Activated CD4-positive, alpha-beta T cell treated with anti-CD3 and anti-CD28 coated beads for 36 hours (primary cell): ENCODE measurements at regions of chr9 and their contacts with region 1.

Region 1: GRCh38 chr9:128455849-128456612 is at the start of gene ODF2:
- DNase-seq: peak; percentile 99
- ATAC-seq: peak; percentile 95
- H3K4me3 Mint-ChIP-seq: peak within 1 kb of the TSS; percentile 81
- H3K27ac Mint-ChIP-seq: peak within 1 kb of the TSS; percentile 82
- H3K4me1 Mint-ChIP-seq: peaks cover 16% of the 10 kb centered on the region
- H3K27me3 Mint-ChIP-seq: no peaks in the 10 kb centered on the region
- total RNA-seq, gene ODF2: 73.5 to 86.4 TPM

Region 2: DNA sequence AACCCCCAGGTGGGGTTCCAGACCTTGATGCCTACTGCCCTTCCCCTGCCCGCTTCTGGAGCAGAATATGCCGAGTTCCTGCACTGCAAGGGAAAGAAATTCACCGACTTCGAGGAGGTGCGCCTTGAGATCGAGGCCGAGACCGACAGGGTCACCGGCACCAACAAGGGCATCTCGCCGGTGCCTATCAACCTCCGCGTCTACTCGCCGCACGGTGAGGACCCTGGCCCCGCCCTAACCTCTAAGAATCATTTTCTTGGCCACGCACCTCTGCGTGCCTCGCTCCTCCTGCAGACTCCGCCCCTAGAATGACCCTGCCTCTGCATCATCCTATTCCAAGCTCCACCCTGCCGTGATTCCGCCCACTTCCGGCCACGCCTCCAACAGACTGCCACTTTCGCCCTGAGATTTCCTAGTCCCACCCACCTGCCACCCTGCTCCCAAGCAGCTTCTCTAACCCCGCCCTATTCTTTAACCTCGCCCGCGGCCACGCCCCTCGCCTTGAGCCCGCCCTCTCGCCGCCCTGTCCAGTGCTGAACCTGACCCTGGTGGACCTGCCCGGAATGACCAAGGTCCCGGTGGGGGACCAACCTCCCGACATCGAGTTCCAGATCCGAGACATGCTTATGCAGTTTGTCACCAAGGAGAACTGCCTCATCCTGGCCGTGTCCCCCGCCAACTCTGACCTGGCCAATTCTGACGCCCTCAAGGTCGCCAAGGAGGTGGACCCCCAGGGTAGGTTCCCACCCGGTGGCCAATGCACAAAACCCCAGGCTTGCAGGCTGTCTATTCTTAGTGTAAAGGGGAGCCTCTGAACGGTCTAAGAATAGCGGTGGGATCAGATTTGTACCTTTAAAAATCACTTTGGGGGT is 237.3 kb before region 1 on chr9:
- CTCF ChIA-PET with region 1: no interaction called
- POLR2A ChIA-PET with region 1: no interaction called
- intact Hi-C with region 1: loop called in 1 of 2 experiments (anchors 1 kb)
- DNase-seq: peak; percentile 97
- ATAC-seq: peak; percentile 98
- H3K4me3 Mint-ChIP-seq: peak overlapping the region; percentile 71
- H3K27ac Mint-ChIP-seq: peak overlapping the region; percentile 74
- H3K4me1 Mint-ChIP-seq: peaks cover 11% of the 10 kb centered on the region
- H3K27me3 Mint-ChIP-seq: no peaks in the 10 kb centered on the region

Region 3: GRCh38 chr9:128361986-128362646 is 93.9 kb before region 1 on chr9:
- CTCF ChIA-PET with region 1: no interaction called
- POLR2A ChIA-PET with region 1: no interaction called
- intact Hi-C with region 1: loop called in 1 of 2 experiments (anchors 2 kb)
- DNase-seq: peak; percentile 85
- ATAC-seq: peak; percentile 93
- H3K4me3 Mint-ChIP-seq: peak overlapping the region; percentile 62
- H3K27ac Mint-ChIP-seq: peak overlapping the region; percentile 59
- H3K4me1 Mint-ChIP-seq: peaks cover 19% of the 10 kb centered on the region
- H3K27me3 Mint-ChIP-seq: no peaks in the 10 kb centered on the region

Region 4: DNA sequence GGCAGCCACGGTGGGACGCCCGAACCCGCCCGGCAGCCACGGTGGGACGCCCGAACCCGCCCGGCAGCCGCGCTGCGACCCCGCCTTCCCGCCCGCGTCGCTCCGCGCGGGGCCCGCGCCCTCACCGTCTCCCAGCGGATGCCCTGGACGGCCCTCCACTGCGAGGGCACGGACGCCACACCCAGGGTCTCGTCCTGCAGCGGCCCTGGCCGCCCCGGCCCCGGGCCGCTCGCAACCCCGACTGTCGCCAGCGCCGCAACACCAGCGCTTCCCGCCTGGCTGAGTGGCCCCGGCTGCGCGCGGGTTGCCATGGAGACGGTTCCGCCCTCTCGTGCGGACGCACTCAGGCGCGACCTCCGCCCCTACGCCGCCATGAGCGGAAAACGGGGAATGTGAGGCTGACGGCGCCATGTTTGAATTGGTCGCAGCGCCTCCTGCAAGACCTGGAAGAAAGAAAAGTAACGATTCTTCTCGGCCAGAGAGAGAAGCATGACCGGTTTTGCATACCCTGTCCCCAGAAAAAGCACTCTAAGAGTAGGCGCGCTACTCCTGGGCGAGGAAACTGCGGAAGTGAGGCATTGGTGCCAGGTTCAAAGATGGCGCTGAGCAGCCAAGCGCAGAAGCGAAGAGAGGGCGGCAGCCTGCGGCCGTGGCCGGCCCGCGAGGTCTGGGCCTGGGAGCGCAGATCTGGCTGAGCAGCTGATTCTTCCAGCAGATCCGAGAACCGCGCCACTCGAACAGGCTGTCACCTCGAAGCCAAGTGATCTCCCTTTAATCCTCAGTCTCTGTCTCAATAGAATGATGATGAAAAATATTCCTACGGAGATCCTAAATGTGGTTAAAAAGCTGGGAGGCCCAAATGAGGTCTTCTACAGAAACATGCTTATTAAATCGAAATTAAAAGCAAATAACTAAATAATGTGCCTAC is 200.6 kb after region 1 on chr9 and contains the start of gene DYNC2I2:
- CTCF ChIA-PET with region 1: no interaction called
- POLR2A ChIA-PET with region 1: no interaction called
- intact Hi-C with region 1: loop called in 1 of 2 experiments (anchors 1 kb)
- DNase-seq: peak; percentile 99
- ATAC-seq: peak; percentile 98
- H3K4me3 Mint-ChIP-seq: peak within 1 kb of the TSS; percentile 82
- H3K27ac Mint-ChIP-seq: peak within 1 kb of the TSS; percentile 100
- H3K4me1 Mint-ChIP-seq: peaks cover 6% of the 10 kb centered on the region
- H3K27me3 Mint-ChIP-seq: no peaks in the 10 kb centered on the region
- total RNA-seq, gene DYNC2I2: 26.7 to 35.7 TPM

Region 5: GRCh38 chr9:128818099-128818838 is 362.2 kb after region 1 on chr9 and contains the start of gene ENDOG:
- CTCF ChIA-PET with region 1: no interaction called
- POLR2A ChIA-PET with region 1: no interaction called
- intact Hi-C with region 1: loop called in 1 of 2 experiments (anchors 1 kb)
- DNase-seq: peak; percentile 98
- ATAC-seq: peak; percentile 98
- H3K4me3 Mint-ChIP-seq: peak within 1 kb of the TSS; percentile 76
- H3K27ac Mint-ChIP-seq: peak within 1 kb of the TSS; percentile 80
- H3K4me1 Mint-ChIP-seq: peaks cover 13% of the 10 kb centered on the region
- H3K27me3 Mint-ChIP-seq: no peaks in the 10 kb centered on the region
- total RNA-seq, gene ENDOG: 7.3 to 9.3 TPM

Region 6: GRCh38 chr9:129080602-129081387 is 624.8 kb after region 1 on chr9 and contains the start of gene DOLPP1:
- CTCF ChIA-PET with region 1: no interaction called
- POLR2A ChIA-PET with region 1: no interaction called
- intact Hi-C with region 1: loop called in 1 of 2 experiments (anchors 1 kb)
- DNase-seq: peak; percentile 99
- ATAC-seq: peak; percentile 98
- H3K4me3 Mint-ChIP-seq: peak within 1 kb of the TSS; percentile 83
- H3K27ac Mint-ChIP-seq: peak within 1 kb of the TSS; percentile 63
- H3K4me1 Mint-ChIP-seq: peaks cover 20% of the 10 kb centered on the region
- H3K27me3 Mint-ChIP-seq: no peaks in the 10 kb centered on the region
- total RNA-seq, gene DOLPP1: 15.1 to 16.4 TPM